A673 (cell line): ENCODE measurements at regions of chr19 and their contacts with region 1.

Region 1: DNA sequence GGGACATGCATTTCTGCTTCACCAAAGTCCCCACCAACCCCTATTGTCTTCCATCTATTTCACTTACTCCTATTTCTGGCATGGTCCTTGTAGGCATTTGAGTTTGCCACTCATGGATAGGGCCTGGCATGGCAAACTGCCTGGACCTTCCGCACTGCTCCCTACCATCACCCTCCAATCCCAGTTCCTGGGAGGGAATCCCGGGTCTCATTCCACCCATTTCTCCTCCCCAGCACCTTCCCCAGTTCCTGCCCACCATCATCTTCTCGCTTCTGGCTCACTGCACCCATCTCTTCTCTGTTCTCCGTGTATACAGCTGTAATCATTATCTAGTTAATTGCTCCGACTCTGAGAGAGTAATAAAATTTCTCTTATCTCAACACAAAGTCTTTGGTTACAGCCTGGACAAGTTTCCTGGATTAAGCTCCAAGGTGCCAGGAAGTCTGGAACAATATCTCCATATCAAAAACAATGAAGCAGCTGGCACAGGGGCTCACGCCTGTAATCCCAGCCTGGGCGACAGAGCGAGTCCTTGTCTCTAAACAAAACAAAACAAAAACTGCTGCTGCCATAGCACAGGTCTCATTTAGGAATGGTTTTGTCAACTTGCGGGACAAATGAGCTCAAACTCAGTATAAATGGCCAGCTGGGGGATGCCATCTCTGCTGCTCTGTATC is 17.0 kb upstream of the COX7A1 start:
- DNase-seq: peak; percentile 91
- H3K4me3 ChIP-seq: no peak overlapping the region
- H3K27ac ChIP-seq: peak overlapping the region; percentile 68
- H3K4me1 ChIP-seq: peaks cover 13% of the 10 kb centered on the region
- H3K27me3 ChIP-seq: no peaks in the 10 kb centered on the region
- CTCF ChIP-seq: no peak

Region 2: GRCh38 chr19:36060430-36060829 is 108.8 kb before region 1 on chr19:
- CTCF ChIA-PET with region 1: no interaction called
- POLR2A ChIA-PET with region 1: interaction called, 3 read pairs
- intact Hi-C with region 1: loop called (anchors 10 kb)
- DNase-seq: peak; percentile 41
- H3K4me3 ChIP-seq: no peak overlapping the region
- H3K27ac ChIP-seq: no peak overlapping the region
- H3K4me1 ChIP-seq: peaks cover 5% of the 10 kb centered on the region
- H3K27me3 ChIP-seq: no peaks in the 10 kb centered on the region
- CTCF ChIP-seq: peak; percentile 58